MCF 10A (cell line): ENCODE measurements at regions of chr9 and their contacts with region 1.

Region 1: DNA sequence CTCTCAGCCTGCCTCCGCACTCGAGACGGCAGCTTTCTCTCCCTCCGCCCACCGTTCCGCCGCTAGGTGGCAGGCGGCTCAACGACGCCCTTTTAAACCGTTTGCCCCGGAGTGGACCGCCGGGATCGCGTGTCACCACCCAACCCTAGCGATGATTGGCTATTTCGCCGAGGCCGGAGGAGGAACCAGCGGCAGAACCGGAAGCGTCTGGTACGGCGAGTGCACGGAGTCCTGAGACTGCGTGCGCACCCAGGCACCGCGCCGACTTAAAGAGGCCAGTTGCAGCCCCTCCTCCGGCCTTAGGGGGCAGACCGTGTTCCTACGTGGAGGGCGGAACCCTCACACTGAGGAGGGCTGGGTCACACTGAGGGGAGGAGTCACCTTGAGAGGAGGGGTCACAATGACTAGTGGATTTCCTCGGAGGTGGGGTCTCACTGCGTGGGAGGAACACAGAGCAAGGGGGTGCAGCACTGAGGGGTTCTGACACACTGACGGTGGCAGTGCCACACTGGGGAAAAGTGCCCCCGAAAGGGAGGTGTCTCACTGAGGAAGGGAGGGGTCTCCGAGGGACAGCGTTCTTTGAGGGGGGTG is 980 bp upstream of the TESK1 start:
- DNase-seq: peak; percentile 99
- H3K4me3 Mint-ChIP-seq: peak overlapping the region; percentile 97
- H3K27ac Mint-ChIP-seq: peak overlapping the region; percentile 99
- H3K4me1 Mint-ChIP-seq: peaks cover 28% of the 10 kb centered on the region
- H3K27me3 Mint-ChIP-seq: no peaks in the 10 kb centered on the region
- CTCF ChIP-seq: peak; percentile 69

Region 2: GRCh38 chr9:35436933-35437332 is 167.1 kb before region 1 on chr9:
- CTCF ChIA-PET with region 1: no interaction called
- POLR2A ChIA-PET with region 1: no interaction called
- intact Hi-C with region 1: no loop called
- DNase-seq: no peak
- H3K4me3 Mint-ChIP-seq: no peak overlapping the region
- H3K27ac Mint-ChIP-seq: no peak overlapping the region
- H3K4me1 Mint-ChIP-seq: peaks cover 3% of the 10 kb centered on the region
- H3K27me3 Mint-ChIP-seq: no peaks in the 10 kb centered on the region
- CTCF ChIP-seq: no peak

Region 3: DNA sequence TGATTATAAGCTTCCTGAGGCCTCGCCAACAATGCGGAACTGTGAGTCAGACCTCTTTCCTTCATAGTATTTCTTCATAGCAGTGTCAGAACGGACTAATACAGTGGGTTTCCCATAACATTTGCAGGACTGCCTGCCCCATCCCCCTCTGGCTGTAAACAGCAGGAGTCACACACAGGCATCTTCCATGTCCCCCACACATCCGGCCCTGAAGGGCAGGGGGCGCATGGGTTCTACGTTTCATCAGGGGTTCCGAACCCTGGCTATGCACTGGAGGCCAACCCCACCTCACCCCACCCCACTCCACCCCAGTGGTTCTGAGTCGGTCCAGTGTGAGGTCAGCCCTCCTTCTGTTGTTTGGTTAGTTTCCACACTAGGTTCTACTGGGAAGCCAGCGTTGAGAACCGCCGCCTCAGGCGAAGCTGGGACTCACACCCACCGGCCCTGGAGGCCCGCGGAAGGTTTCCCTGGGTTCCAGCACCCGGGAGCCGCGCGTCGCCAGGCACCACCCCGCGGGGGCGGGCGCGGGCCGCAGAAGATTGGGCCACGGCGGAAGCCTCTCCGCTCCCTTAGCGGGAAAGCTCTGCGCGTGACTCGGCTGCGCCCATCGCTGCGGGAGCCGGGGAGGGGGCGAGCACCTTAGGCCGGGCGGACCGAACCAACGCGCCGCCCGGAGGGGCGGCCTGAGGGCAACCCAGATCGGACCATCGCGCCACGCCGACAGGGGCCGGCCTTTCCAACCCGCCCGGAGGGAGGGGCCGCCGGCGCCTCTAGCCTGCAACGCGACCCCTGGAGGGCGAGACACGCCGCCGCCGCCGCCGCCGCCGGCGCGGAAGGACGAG is 114.5 kb before region 1 on chr9 and contains the start of gene RUSC2:
- CTCF ChIA-PET with region 1: no interaction called
- POLR2A ChIA-PET with region 1: interaction called, 7 read pairs
- intact Hi-C with region 1: loop called (anchors 2 kb)
- DNase-seq: peak; percentile 85
- H3K4me3 Mint-ChIP-seq: peak within 1 kb of the TSS; percentile 93
- H3K27ac Mint-ChIP-seq: peak within 1 kb of the TSS; percentile 97
- H3K4me1 Mint-ChIP-seq: peaks cover 23% of the 10 kb centered on the region
- H3K27me3 Mint-ChIP-seq: no peaks in the 10 kb centered on the region
- CTCF ChIP-seq: peak; percentile 20
- total RNA-seq, gene RUSC2: 27.8 and 30.5 TPM in 2 replicates

Region 4: DNA sequence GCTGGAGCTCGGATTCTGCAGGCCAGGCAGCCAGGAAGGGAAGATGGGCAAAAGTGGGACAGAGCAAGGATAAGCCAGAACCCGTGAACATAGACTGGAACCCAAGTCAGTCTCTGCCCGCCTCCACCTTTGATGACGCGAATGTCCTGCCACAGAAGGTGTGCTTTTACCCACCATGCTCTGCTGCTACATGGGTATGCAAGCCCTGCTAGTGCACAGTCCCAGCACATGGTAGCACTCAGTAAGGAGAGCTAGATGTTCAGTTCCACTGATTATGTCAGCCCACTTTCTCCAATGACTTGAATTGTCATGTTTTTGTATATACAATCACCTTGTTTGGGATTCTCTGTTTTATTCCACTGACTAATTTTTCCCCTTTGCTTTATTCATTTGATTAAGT is 25.5 kb after region 1 on chr9:
- CTCF ChIA-PET with region 1: no interaction called
- POLR2A ChIA-PET with region 1: no interaction called
- intact Hi-C with region 1: no loop called
- DNase-seq: no peak
- H3K4me3 Mint-ChIP-seq: no peak overlapping the region
- H3K27ac Mint-ChIP-seq: no peak overlapping the region
- H3K4me1 Mint-ChIP-seq: no peaks in the 10 kb centered on the region
- H3K27me3 Mint-ChIP-seq: no peaks in the 10 kb centered on the region
- CTCF ChIP-seq: no peak

Region 5: DNA sequence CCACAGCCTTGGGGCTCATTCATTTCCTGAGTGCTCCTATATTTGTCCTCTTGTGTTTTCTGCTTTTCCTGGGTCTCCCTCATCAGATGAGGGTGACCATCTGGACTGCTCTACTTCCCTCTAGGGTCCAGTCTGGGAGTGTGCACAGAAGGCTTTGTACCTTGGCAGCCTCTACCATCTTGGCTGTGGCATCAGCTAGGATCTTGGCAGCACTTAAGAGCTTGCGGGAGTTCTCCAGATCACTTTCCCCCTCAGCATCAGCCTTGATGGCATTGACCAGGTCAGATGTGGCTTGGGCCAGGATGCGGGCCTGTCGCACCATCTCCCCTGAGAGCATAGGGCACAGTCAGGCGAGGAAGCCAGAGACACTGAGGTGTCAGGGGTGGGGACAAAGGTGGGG is 112.1 kb after region 1 on chr9:
- CTCF ChIA-PET with region 1: no interaction called
- POLR2A ChIA-PET with region 1: no interaction called
- intact Hi-C with region 1: no loop called
- DNase-seq: no peak
- H3K4me3 Mint-ChIP-seq: no peak overlapping the region
- H3K27ac Mint-ChIP-seq: no peak overlapping the region
- H3K4me1 Mint-ChIP-seq: peaks cover 6% of the 10 kb centered on the region
- H3K27me3 Mint-ChIP-seq: no peaks in the 10 kb centered on the region
- CTCF ChIP-seq: no peak

Region 6: GRCh38 chr9:35829084-35829763 is 225.1 kb after region 1 on chr9 and contains the start of gene TMEM8B:
- CTCF ChIA-PET with region 1: no interaction called
- POLR2A ChIA-PET with region 1: no interaction called
- intact Hi-C with region 1: no loop called
- DNase-seq: peak; percentile 91
- H3K4me3 Mint-ChIP-seq: peak within 1 kb of the TSS; percentile 81
- H3K27ac Mint-ChIP-seq: peak within 1 kb of the TSS; percentile 71
- H3K4me1 Mint-ChIP-seq: peaks cover 41% of the 10 kb centered on the region
- H3K27me3 Mint-ChIP-seq: no peaks in the 10 kb centered on the region
- CTCF ChIP-seq: no peak
- total RNA-seq, gene TMEM8B: 4.6 and 7.0 TPM in 2 replicates